Activated B cell treated with CpG ODN at 0.5 μM for 24 hours (primary cell): ENCODE measurements at regions of chr4 and their contacts with region 1.

Region 1: GRCh38 chr4:70601422-70602039 is 9.5 kb downstream of the AMBN start:
- DNase-seq: peak; percentile 45
- ATAC-seq: peak; percentile 84
- H3K4me3 Mint-ChIP-seq: no peak overlapping the region
- H3K27ac Mint-ChIP-seq: no peak overlapping the region
- H3K4me1 Mint-ChIP-seq: no peaks in the 10 kb centered on the region
- H3K27me3 Mint-ChIP-seq: peaks cover 2% of the 10 kb centered on the region
- CTCF ChIP-seq: no peak

Region 2: GRCh38 chr4:70687821-70688794 is 86.6 kb after region 1 on chr4 and contains the start of gene UTP3:
- CTCF ChIA-PET with region 1: interaction called, 6 read pairs
- POLR2A ChIA-PET with region 1: no interaction called
- intact Hi-C with region 1: loop called (anchors 1 kb)
- DNase-seq: peak; percentile 83
- ATAC-seq: peak; percentile 88
- H3K4me3 Mint-ChIP-seq: peak within 1 kb of the TSS; percentile 99
- H3K27ac Mint-ChIP-seq: peak within 1 kb of the TSS; percentile 100
- H3K4me1 Mint-ChIP-seq: peaks cover 48% of the 10 kb centered on the region
- H3K27me3 Mint-ChIP-seq: no peaks in the 10 kb centered on the region
- CTCF ChIP-seq: peak; percentile 96
- total RNA-seq, gene UTP3: 38.5 and 40.1 TPM in 2 replicates

Region 3: GRCh38 chr4:71009890-71010588 is 408.5 kb after region 1 on chr4:
- CTCF ChIA-PET with region 1: interaction called, 3 read pairs
- POLR2A ChIA-PET with region 1: interaction called, 12 read pairs
- intact Hi-C with region 1: loop called (anchors 1 kb)
- DNase-seq: no peak
- ATAC-seq: peak; percentile 46
- H3K4me3 Mint-ChIP-seq: peak overlapping the region; percentile 2
- H3K27ac Mint-ChIP-seq: peak overlapping the region; percentile 64
- H3K4me1 Mint-ChIP-seq: peaks cover 65% of the 10 kb centered on the region
- H3K27me3 Mint-ChIP-seq: no peaks in the 10 kb centered on the region
- CTCF ChIP-seq: peak; percentile 56

Region 4: GRCh38 chr4:71713611-71714203 is 1112.2 kb after region 1 on chr4:
- CTCF ChIA-PET with region 1: interaction called, 24 read pairs
- POLR2A ChIA-PET with region 1: no interaction called
- intact Hi-C with region 1: loop called (anchors 1 kb)
- DNase-seq: no peak
- ATAC-seq: no peak
- H3K4me3 Mint-ChIP-seq: no peak overlapping the region
- H3K27ac Mint-ChIP-seq: no peak overlapping the region
- H3K4me1 Mint-ChIP-seq: no peaks in the 10 kb centered on the region
- H3K27me3 Mint-ChIP-seq: no peaks in the 10 kb centered on the region
- CTCF ChIP-seq: no peak

Region 5: GRCh38 chr4:72468904-72469502 is 1867.5 kb after region 1 on chr4:
- CTCF ChIA-PET with region 1: no interaction called
- POLR2A ChIA-PET with region 1: no interaction called
- intact Hi-C with region 1: loop called (anchors 2 kb)
- DNase-seq: no peak
- ATAC-seq: no peak
- H3K4me3 Mint-ChIP-seq: no peak overlapping the region
- H3K27ac Mint-ChIP-seq: no peak overlapping the region
- H3K4me1 Mint-ChIP-seq: no peaks in the 10 kb centered on the region
- H3K27me3 Mint-ChIP-seq: no peaks in the 10 kb centered on the region
- CTCF ChIP-seq: no peak